ENCODE measurements at regions of chr1 and their contacts with region 1.

Region 1: DNA sequence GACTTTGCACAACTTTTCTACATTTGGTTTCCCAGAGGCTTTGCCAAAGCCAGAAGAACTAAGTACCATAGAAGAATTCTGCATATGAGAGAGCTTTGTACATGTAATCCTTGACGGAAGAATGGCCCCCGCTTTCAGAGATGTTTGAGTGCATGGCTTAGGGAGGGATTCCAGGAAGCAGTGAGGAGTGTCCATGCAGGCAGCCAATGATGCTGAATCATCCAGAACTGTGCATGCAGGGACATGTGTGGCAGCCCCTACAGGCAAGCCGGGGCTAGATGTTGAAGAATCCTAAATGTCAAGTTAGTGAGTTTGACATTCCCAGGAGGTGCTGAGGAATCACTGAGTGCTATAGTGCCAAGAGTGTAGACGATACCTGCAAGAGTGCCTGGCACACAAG is 9.9 kb upstream of the HAO2 start:
- DNase-seq: no peak
- ATAC-seq: no peak
- H3K4me3 ChIP-seq: no peak overlapping the region
- H3K27ac ChIP-seq: no peak overlapping the region
- H3K4me1 ChIP-seq: peaks cover 7% of the 10 kb centered on the region; the same call in 1 of the 2 replicates
- H3K27me3 ChIP-seq: no peaks in the 10 kb centered on the region
- CTCF ChIP-seq: no peak
- EP300 ChIP-seq: no peak
- POLR2A ChIP-seq: no peak
- RAD21 ChIP-seq: no peak

Region 2: GRCh38 chr1:119347858-119348257 is 10.8 kb before region 1 on chr1:
- CTCF ChIA-PET with region 1: interaction called, 8 read pairs
- POLR2A ChIA-PET with region 1: interaction called, 3 read pairs
- RAD21 ChIA-PET with region 1: interaction called, 36 read pairs
- SMC1A ChIA-PET with region 1: interaction called, 13 read pairs
- in situ Hi-C with region 1: no loop called
- intact Hi-C with region 1: no loop called
- DNase-seq: peak; percentile 77
- ATAC-seq: peak; percentile 96
- H3K4me3 ChIP-seq: no peak overlapping the region
- H3K27ac ChIP-seq: no peak overlapping the region
- H3K4me1 ChIP-seq: peaks cover 5% of the 10 kb centered on the region; the same call in 1 of the 2 replicates
- H3K27me3 ChIP-seq: no peaks in the 10 kb centered on the region
- CTCF ChIP-seq: no peak
- EP300 ChIP-seq: 0 out of 4 replicates have a peak, but pooled peaks of 1 of the 2 experiments have one; percentile 43
- POLR2A ChIP-seq: no peak
- RAD21 ChIP-seq: no peak

Region 3: DNA sequence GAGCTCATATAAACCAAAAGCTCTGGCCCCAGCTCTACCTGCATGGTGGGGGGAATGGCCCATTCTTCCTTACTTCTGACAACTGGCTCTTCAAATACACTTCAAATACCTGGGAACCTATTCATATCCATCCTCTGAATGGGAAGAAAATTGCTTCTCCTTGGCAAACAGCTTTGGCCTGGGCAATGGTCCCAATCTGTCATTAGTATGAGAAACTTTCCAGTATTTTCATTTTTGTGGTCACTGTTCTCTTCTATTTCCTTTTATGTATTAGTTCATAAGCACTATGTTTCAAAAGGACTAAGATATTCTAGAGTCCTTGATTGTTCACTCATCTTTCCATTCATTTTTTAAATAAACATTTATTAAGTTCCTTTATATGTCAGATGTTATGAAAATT is 51.1 kb after region 1 on chr1:
- CTCF ChIA-PET with region 1: no interaction called
- POLR2A ChIA-PET with region 1: no interaction called
- RAD21 ChIA-PET with region 1: no interaction called
- SMC1A ChIA-PET with region 1: no interaction called
- in situ Hi-C with region 1: loop called (anchors 5 kb)
- intact Hi-C with region 1: no loop called
- DNase-seq: no peak
- ATAC-seq: no peak
- H3K4me3 ChIP-seq: no peak overlapping the region
- H3K27ac ChIP-seq: no peak overlapping the region
- H3K4me1 ChIP-seq: no peaks in the 10 kb centered on the region
- H3K27me3 ChIP-seq: no peaks in the 10 kb centered on the region; a peak in 1 of 4 replicates
- CTCF ChIP-seq: no peak
- EP300 ChIP-seq: no peak
- POLR2A ChIP-seq: no peak
- RAD21 ChIP-seq: no peak